Posterior cingulate gyrus (tissue), 11 donors: ENCODE measurements at regions of chr3 and their contacts with region 1.

Region 1: DNA sequence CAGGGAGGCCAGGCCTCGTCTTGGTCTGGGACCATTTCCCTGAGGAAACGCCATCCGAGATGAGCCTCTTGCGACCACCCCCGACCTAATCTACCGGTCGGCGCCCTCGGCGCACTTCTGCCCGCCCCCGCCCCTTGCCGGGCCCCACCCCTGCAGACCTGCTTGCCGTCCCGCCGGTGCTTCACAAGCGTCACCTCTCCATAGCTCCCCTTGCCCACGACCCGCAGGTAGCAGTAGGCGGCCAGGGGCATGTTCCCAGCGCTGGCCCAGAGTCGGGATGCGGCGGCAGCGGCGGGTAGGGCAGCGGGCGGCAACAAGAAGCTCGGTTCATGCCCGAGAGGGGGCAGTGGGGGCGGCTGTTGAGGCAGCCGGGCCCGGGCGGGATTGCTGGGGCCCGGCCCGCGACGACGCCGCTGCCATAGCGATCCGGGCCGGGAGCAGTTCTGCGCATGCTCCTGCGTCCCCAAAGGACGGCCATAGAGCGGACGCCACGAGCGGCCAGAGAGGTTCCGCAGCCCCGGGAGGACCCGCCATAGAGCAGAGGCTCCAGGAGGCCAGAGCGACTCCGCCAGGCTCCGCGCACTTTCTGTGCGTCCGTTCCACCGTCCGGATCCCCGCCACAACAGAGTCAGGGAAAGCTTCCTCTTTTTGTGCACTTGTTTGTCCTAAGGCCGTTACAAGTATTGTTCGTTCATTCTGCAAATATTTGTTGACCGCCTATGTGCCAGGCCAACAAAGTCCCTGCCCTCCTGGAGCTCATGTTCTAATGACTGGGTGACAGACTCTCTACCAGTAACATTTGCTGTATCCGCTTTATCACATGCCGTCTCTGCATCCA is at the start of gene NEK4:
- DNase-seq: peak; percentile 89 to 99 (median 94)

Region 2: DNA sequence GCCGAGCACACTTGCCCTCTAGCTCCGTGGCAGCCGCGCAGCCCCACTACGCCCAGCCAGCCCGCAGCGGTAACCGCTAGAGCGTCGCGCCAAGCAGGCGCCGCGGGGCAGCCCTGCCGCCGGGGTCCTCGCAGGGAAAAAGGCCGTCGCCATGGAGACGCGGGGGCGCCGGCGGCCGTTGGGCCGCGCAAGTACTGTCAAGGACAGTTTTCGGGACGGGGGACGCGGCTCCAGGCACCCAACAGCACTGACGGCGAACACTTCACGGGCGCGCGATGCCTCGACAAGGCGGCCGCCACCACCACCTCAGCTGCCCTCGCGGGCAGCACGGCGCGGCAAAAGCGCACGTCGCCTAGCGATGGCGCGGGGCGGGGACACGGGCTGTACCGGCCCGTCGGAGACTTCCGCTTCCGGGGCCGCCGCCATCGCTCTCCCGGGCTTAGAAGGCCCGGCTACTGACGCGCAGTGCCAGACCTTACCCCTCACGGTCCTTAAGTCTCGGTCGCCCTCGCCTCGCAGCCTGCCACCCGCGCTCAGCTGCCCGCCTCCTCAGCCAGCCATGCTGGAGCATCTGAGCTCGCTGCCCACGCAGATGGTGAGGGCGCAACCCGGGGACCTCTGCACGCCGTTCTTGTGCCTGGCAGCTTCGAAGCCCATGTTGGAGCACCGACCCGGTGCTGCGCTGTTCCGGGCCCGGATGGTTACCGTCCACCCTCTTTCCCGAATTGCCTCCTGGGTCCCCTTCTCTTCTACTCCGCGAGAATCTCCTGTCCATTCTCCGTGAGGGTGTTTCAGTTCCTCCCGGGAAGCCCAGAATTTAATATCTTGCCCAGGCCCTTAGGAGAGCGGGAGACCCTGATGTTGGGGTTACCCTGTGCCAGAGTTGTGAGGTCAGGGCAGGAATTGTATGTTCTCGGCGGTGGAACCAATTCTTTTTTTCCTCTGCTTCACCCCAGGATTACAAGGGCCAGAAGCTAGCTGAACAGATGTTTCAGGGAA is 64.7 kb before region 1 on chr3 and contains the starts of genes GLT8D1 and SPCS1:
- intact Hi-C with region 1: loop called (anchors 2 kb)
- DNase-seq: peak; percentile 77 to 99 (median 88)